ENCODE measurements at regions of chr5 and their contacts with region 1.

Region 1: DNA sequence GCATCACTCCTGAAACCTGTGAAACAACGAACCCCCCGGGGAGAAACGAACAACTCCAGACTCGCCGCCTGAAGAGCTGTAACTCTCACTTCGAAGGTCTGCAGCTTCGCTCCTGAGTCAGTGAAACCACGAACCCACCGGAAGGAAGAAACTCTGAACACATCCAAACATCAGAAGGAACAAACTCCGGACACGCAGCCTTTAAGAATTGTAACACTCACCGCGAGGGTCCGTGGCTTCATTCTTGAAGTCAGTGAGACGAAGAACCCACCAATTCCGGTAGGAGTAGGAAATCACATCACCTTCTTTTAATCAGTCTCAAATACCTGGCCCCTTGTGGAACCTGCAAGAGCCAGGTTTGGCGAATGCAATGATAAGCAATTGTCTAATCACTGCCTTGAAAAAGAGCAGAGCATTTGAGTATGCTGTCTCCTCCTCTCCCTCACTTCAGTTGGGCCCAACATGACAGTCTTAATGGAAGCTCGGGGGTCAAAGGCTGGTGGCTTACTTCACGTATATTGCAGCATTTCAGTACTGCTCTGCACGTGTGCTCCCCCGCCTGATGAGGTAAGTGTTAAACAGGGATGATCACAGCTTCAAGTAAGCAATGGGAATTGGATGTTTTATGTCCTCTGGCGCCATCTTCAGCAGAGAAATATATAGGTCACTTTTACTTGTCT is 473 bp downstream of the IRGM start:
- DNase-seq: peak; percentile 90
- H3K4me3 Mint-ChIP-seq: peak overlapping the region; percentile 80
- H3K27ac Mint-ChIP-seq: peak overlapping the region; percentile 85
- H3K4me1 Mint-ChIP-seq: peaks cover 30% of the 10 kb centered on the region
- H3K27me3 Mint-ChIP-seq: peaks cover 3% of the 10 kb centered on the region

Region 2: DNA sequence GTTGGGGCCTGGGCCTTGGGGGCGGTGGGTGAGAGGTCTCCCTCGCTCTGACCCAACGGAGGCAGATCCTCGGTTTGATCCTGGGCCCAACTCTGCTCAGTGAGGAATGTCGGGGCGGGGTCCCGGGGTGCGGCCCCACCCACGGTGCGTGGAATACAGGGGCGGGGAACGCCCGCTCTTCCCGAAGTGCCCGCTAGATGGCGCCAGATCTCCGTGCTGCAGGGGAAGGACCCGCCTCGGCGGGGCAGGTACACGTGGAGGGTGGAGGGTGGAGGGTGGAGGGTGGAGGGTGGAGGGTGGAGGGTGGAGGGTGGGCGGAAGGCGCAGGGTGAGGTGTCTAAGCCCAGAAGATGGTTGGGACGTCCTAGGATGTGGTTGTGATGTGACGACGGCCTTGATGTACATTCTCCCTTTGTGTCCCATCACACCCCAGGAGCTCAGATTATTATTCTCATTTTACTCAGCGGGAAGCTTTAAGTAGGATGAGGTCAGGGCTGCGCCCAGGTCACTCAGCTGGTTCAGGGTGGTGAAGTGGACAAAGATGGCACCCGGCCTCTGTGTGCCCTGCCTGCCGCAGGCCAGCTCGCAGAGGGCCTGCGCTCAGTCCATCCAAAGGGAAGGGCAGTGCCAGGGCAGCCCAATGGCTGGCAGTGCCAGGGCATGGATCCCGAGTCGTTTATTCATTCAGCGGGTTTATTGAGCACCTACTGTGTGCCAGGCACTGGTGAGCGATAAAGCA is 387.8 kb before region 1 on chr5:
- intact Hi-C with region 1: loop called (anchors 1 kb)
- DNase-seq: peak; percentile 96
- H3K4me3 Mint-ChIP-seq: peak overlapping the region; percentile 44
- H3K27ac Mint-ChIP-seq: peak overlapping the region; percentile 10
- H3K4me1 Mint-ChIP-seq: peaks cover 27% of the 10 kb centered on the region
- H3K27me3 Mint-ChIP-seq: no peaks in the 10 kb centered on the region

Region 3: DNA sequence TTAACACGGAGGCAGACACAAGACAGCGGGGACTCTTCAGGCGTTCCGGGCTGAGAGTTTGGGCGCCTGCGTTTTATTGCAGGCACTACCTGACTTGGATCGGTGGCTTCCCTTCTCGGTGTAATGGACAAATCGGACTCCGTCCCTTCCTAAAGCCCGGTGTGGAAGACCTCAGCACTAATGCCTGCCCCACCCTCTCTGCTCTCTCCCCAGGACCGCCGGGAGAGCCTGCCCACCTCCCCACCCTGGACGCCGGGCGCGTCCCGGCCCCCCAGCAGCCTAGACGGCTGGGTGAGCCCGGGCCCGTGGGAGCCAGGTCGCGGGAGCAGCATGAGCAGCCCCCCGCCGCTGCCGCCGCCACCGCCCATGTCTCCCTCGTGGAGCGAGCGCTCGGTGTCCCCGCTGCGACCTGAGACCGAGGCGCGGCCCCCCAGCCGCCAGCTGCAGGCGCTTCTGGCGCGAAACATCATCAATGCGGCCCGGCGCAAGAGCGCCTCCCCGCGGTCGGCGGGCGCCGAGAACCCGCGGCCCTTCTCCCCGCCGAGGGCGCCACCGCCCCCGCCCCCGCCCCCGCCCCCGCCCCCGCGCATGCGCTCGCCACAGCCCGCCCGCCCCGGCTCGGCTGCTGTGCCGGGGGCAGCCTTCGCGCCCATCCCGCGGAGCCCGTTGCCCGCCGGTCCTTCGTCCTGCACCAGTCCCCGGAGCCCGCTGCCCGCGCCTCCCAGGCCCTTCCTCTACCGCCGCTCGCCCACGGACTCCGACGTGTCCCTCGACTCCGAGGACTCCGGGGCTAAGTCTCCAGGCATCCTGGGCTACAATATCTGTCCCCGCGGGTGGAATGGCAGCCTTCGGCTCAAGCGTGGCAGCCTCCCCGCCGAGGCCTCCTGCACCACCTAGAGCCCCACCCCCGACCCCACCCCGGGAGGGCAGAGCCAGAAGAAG is 190.3 kb before region 1 on chr5:
- intact Hi-C with region 1: loop called (anchors 5 kb)
- DNase-seq: peak; percentile 95
- H3K4me3 Mint-ChIP-seq: peak overlapping the region; percentile 80
- H3K27ac Mint-ChIP-seq: peak overlapping the region; percentile 68
- H3K4me1 Mint-ChIP-seq: peaks cover 10% of the 10 kb centered on the region
- H3K27me3 Mint-ChIP-seq: peaks cover 24% of the 10 kb centered on the region

Region 4: GRCh38 chr5:150723845-150724244 is 122.9 kb before region 1 on chr5:
- intact Hi-C with region 1: no loop called
- DNase-seq: no peak
- H3K4me3 Mint-ChIP-seq: no peak overlapping the region
- H3K27ac Mint-ChIP-seq: no peak overlapping the region
- H3K4me1 Mint-ChIP-seq: no peaks in the 10 kb centered on the region
- H3K27me3 Mint-ChIP-seq: no peaks in the 10 kb centered on the region

Region 5: GRCh38 chr5:150778517-150779396 is 68.0 kb before region 1 on chr5 and contains the start of gene SMIM3:
- intact Hi-C with region 1: loop called (anchors 1 kb)
- DNase-seq: peak; percentile 91
- H3K4me3 Mint-ChIP-seq: peak within 1 kb of the TSS; percentile 100
- H3K27ac Mint-ChIP-seq: peak within 1 kb of the TSS; percentile 97
- H3K4me1 Mint-ChIP-seq: peaks cover 56% of the 10 kb centered on the region
- H3K27me3 Mint-ChIP-seq: no peaks in the 10 kb centered on the region
- total RNA-seq, gene SMIM3: 13.8 and 16.6 TPM in 2 replicates

Region 6: DNA sequence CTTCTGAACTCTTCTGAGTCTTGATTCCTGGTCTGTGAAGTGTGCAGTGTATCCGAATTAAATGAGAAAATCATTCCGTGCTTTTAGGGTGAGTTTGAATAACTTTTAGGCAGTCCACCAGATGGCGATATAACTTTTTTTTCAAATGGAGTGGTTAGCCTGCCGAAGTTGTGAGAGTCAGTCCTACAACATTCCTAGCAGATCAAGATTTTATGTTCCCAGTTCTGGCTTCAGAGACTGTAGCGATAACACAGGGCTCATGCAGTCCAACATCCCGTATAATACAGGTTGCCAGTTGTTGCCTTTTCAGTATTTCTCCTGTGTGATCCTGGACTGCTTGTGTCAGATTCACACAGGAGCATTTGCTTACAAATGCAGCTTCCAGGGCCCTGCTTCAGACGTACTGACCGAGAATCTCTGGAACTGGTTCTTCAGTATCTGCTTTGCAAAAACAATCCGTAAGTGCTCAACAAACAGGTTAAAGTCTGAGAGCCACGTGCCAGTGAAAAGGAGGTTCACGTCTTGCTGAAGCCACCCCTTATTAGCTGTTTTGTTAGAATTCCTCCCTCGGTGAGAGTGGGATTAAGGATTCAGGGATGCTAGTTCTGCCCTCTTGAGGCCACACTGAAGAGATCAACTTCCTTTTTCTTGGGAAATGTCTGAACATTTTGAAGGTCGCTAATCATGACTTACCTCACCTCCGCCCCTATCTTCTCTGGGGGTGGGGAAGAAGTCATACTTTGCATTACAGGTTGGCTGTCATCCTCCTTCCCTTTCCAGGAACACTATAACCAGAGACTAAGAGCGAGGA is 45.5 kb before region 1 on chr5:
- intact Hi-C with region 1: loop called (anchors 1 kb)
- DNase-seq: peak; percentile 77
- H3K4me3 Mint-ChIP-seq: no peak overlapping the region
- H3K27ac Mint-ChIP-seq: peak overlapping the region; percentile 68
- H3K4me1 Mint-ChIP-seq: peaks cover 17% of the 10 kb centered on the region
- H3K27me3 Mint-ChIP-seq: peaks cover 8% of the 10 kb centered on the region